PC-3 (cell line): ENCODE measurements at regions of chr3 and their contacts with region 1.

Region 1: GRCh38 chr3:79872504-79873159 is 104.8 kb upstream of the ROBO1 start:
- DNase-seq: peak; percentile 94
- ATAC-seq: peak; percentile 97
- H3K4me3 ChIP-seq: no peak overlapping the region
- H3K27ac ChIP-seq: peak overlapping the region; percentile 68
- H3K4me1 ChIP-seq: peaks cover 26% of the 10 kb centered on the region
- H3K27me3 ChIP-seq: no peaks in the 10 kb centered on the region
- CTCF ChIP-seq: no peak

Region 2: DNA sequence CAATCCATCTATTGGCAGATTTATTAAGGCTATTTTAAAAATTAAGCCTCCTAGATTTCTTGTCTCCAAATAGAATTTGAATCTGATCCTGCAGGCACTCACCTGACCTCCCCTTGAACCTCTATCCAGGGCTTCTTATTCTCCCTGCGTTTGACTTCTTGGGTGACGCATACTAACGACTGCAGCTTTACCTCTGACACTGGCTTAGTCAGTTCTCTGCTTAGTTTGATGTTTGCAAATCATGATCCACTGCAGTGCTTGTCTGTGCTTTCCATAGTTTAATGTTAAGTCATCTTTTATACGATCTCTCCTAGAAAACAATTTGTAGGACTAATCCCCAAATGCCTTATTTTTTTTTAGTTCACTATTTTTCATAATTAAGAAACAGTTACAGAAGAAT is 337.9 kb before region 1 on chr3:
- CTCF ChIA-PET with region 1: no interaction called
- POLR2A ChIA-PET with region 1: no interaction called
- intact Hi-C with region 1: loop called (anchors 1 kb)
- DNase-seq: peak; percentile 80
- ATAC-seq: peak; percentile 86
- H3K4me3 ChIP-seq: no peak overlapping the region
- H3K27ac ChIP-seq: peak overlapping the region; percentile 67
- H3K4me1 ChIP-seq: peaks cover 46% of the 10 kb centered on the region
- H3K27me3 ChIP-seq: no peaks in the 10 kb centered on the region
- CTCF ChIP-seq: no peak

Region 3: DNA sequence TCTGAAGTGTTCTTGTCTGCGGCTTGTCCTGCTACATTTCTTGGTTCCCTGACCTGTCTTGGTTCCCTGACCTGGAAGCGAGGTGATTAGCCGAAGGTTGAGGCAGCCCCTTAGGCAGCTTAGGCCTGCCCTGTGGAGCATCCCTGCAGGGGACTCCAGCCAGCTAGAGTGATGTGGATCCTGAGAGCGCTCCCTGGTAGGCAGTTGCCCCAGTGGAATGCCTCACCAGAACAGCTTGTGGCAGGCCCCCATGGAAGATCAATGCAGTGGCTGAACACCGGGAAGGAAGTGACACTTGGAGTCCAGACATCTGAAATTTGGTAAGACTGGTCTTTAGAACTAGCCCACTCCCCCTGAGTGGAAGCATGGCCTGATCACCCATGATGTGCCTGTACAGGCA is 99.3 kb before region 1 on chr3:
- CTCF ChIA-PET with region 1: no interaction called
- POLR2A ChIA-PET with region 1: no interaction called
- intact Hi-C with region 1: loop called (anchors 5 kb)
- DNase-seq: no peak
- ATAC-seq: no peak
- H3K4me3 ChIP-seq: no peak overlapping the region
- H3K27ac ChIP-seq: no peak overlapping the region
- H3K4me1 ChIP-seq: no peaks in the 10 kb centered on the region
- H3K27me3 ChIP-seq: 0 out of 2 replicates have a peak, but pooled peaks cover 3% of the 10 kb centered on the region
- CTCF ChIP-seq: no peak

Region 4: DNA sequence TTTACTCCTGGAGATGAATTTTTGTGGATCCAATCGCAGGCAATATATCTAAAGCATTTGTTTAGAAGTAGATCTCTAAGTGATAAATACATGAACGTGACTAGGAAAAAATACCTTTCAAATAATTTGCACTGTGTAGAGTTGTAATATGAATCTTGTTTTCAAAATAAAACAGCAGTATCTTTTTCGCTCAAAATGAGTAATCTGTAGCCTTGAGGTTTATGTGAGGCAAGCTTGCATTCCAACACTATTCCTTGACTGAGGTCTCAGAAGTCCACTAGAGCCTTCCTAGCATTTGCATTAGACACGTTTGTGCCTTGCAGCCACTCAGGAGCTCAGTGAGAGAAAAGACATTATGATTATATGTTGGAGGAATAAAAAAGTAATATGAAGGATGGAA is 33.5 kb after region 1 on chr3:
- CTCF ChIA-PET with region 1: no interaction called
- POLR2A ChIA-PET with region 1: no interaction called
- intact Hi-C with region 1: loop called (anchors 1 kb)
- DNase-seq: no peak
- ATAC-seq: no peak
- H3K4me3 ChIP-seq: no peak overlapping the region
- H3K27ac ChIP-seq: no peak overlapping the region
- H3K4me1 ChIP-seq: no peaks in the 10 kb centered on the region
- H3K27me3 ChIP-seq: no peaks in the 10 kb centered on the region
- CTCF ChIP-seq: no peak